ENCODE measurements at regions of chr9 and their contacts with region 1.

Region 1: DNA sequence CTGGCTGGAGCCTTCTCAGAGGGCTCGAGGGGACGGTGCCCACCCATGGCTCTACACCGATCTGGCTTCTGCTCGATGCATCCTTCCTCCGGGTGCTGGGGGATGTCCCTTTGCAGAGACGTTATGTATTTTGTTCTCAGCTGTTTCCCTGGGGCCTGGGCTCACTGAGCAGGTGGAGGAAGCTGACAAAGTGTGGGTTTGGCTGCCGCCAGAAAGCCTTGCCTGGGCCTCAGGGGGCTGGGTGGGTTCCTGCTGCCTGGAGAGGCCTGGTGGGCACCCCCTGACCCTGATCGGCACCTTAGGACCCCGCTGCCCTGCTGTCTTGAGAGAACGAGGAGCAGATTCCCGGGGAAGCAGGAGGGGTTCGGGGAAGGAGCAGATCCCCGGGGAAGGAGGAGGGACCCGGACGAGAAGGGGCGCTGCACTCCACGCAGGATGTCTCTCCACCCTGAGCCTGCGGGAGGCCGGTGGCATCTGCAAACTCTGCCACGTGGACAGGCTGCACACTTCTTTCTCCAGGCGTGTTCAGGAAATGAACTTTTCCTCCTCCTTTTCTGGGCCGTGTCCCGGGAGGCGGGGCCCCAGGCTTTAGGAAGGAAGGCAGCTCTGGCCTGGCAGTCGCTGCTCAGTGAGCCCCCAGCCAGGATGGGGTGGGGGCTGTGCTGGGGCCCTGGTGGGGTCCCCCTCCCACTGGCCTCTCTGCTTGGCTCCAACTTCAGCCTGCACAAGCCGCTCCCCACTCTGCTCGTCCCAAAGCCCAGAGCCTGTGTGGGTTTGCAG is 148.9 kb downstream of the RXRA start:
- DNase-seq: peak in 7 of 9 donors; percentile 41 to 72 (median 59)
- ATAC-seq: peak; percentile 75
- H3K4me3 ChIP-seq: no peak overlapping the region
- H3K4me3 Mint-ChIP-seq: peak overlapping the region in 7 of 10 donors; percentile 23 to 77 (median 66)
- H3K27ac ChIP-seq: peak overlapping the region; percentile 78
- H3K27ac Mint-ChIP-seq: peak overlapping the region; percentile 66 to 98 (median 95)
- H3K4me1 ChIP-seq: peaks cover 0 to 33% of the 10 kb centered on the region in 2 donors
- H3K4me1 Mint-ChIP-seq: peaks cover 0 to 17% (median 9%) of the 10 kb centered on the region in 7 donors
- H3K27me3 ChIP-seq: no peaks in the 10 kb centered on the region
- H3K27me3 Mint-ChIP-seq: no peaks in the 10 kb centered on the region

Region 2: DNA sequence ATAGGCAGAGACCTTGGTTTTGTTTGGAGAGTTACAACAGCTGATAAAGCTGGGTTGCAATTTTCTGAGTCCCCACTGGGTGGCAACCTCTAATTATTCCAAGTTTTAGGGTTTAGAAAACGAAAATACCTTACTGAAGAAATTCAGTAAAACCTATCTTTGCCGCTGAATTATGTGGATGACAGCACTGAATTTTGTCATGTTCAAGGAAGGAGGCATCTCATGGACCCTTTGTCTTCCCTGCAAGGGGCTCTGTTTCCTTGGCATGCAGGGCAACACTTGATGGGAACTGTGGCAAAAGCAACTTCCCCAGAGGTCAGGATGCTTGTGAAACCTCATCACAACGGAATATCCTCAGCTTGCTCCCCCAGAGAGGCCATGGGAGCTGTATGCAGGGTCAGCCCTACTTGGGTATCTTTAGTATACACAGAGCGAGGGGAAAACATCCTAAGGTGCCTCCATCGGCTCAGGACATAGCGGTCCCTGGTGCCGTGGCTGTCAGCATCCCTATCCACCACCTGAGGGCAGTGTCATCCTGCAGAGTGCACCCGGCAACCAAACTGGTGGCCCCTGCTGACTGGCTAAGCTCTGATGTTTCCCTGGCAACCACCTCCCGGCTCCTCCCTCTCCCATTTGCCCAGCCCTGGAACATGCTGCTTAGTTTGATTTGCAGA is 25.8 kb before region 1 on chr9:
- CTCF ChIA-PET with region 1: no interaction called
- POLR2A ChIA-PET with region 1: interaction called, 3 read pairs
- intact Hi-C with region 1: loop called in 1 of 2 experiments (anchors 2 kb)
- DNase-seq: peak; percentile 58 to 89 (median 85)
- ATAC-seq: peak; percentile 100
- H3K4me3 ChIP-seq: no peak overlapping the region
- H3K4me3 Mint-ChIP-seq: no peak overlapping the region
- H3K27ac ChIP-seq: no peak overlapping the region
- H3K27ac Mint-ChIP-seq: peak overlapping the region in 6 of 9 donors; percentile 6 to 70 (median 48)
- H3K4me1 ChIP-seq: no peaks in the 10 kb centered on the region
- H3K4me1 Mint-ChIP-seq: peaks cover 4 to 12% (median 6%) of the 10 kb centered on the region in 7 donors
- H3K27me3 ChIP-seq: no peaks in the 10 kb centered on the region
- H3K27me3 Mint-ChIP-seq: no peaks in the 10 kb centered on the region

Region 3: DNA sequence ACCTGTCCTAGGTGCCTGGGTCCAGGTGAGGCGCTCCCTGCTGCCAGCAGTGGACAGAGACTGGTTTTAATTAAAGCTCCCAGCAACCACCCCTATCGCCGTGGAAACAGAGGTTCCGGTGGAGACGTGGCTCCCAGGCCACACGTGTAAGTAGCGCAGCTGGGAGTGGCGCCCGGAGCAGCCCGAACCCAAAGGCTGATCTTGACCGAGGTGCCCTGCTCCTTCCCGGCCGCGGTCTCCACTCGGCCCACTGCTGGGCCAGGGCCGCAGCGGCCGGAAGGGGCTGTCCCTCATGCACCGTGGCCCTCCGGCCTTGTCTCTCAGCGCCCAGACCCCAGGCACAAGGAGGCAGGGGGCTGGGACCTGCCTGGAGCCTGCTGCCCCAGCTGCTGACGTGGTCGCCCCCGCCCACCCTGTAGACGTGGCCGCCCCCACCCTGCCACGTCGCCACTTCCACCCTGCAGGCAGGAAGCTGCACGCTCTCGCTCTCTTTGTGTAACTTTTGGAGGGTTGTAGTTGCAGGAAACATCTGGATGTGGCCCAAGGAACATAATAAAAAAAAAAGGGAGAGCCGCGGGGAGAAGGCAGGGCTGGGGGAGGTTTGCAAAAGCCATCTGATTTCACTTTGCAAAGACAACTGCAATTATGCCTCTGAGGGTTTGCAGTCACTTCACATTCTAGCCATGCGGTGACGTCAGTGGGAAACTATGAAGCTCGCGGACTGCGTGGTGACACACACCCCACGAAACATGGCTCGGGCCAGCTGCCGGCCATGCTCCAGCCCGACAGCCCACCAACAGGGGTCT is 19.1 kb before region 1 on chr9:
- CTCF ChIA-PET with region 1: interaction called, 6 read pairs
- POLR2A ChIA-PET with region 1: interaction called, 8 read pairs
- intact Hi-C with region 1: loop called in 1 of 2 experiments (anchors 1 kb)
- DNase-seq: peak; percentile 57 to 87 (median 80)
- ATAC-seq: peak; percentile 91
- H3K4me3 ChIP-seq: peak overlapping the region; percentile 63
- H3K4me3 Mint-ChIP-seq: peak overlapping the region; percentile 66 to 96 (median 84)
- H3K27ac ChIP-seq: peak overlapping the region; percentile 84
- H3K27ac Mint-ChIP-seq: peak overlapping the region; percentile 79 to 99 (median 95)
- H3K4me1 ChIP-seq: peaks cover 10 to 20% of the 10 kb centered on the region in 2 donors
- H3K4me1 Mint-ChIP-seq: peaks cover 0 to 19% (median 11%) of the 10 kb centered on the region in 7 donors
- H3K27me3 ChIP-seq: no peaks in the 10 kb centered on the region
- H3K27me3 Mint-ChIP-seq: no peaks in the 10 kb centered on the region

Region 4: DNA sequence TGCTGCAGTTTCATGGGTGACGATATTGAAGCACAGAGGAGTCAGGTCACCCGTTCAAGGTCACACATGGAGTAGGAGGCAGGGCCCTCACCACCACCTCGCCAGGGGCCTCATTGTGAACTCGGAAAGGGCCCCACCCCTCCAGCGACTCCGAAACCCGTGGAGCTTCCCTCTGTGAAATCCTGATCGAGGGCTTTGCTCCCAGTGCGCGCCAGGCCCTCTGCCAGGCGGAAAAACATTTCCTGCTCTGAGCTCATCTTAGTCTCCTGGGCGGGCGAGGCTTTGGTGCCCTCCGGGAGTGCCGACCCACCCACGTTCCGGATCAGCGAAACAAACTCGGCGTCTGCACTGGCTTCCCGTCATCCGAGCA is 517.5 kb after region 1 on chr9:
- CTCF ChIA-PET with region 1: no interaction called
- POLR2A ChIA-PET with region 1: no interaction called
- intact Hi-C with region 1: no loop called
- DNase-seq: no peak
- ATAC-seq: no peak
- H3K4me3 ChIP-seq: no peak overlapping the region
- H3K4me3 Mint-ChIP-seq: no peak overlapping the region
- H3K27ac ChIP-seq: no peak overlapping the region
- H3K27ac Mint-ChIP-seq: no peak overlapping the region
- H3K4me1 ChIP-seq: no peaks in the 10 kb centered on the region
- H3K4me1 Mint-ChIP-seq: no peaks in the 10 kb centered on the region
- H3K27me3 ChIP-seq: no peaks in the 10 kb centered on the region
- H3K27me3 Mint-ChIP-seq: peaks cover 0 to 14% (median 9%) of the 10 kb centered on the region in 5 donors